ENCODE measurements at regions of chr1 and their contacts with region 1.

Region 1: DNA sequence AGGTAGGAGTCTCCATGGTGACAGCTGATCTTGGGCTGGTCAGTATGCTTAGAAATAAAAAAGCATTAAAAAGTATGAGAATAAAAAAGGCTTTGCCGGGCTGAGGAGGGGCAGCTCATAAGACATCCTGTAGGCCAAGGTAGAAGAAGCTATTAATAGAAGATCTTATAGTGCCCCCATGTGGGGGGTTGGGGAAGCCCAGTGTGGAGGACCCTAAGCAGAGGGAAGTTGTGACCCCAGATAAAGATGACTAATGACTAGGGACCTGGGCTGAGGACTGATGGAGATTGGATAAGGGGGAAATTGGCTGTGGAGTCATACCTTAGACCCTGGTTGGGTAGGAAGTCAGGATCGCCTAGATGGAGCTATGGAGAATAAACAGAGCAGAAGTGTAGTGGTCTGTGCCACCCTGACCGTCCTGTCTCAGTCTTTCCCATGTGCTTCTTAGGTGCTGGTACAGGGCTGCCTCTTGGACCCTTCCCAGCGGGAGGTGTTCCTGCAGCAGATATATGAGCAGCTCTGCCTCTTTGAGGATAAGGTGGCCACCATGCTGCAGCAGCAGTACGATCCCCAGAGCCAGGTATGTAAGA is 25.0 kb downstream of the SZT2 start:
- DNase-seq: peak; percentile 62
- ATAC-seq: peak; percentile 95
- H3K4me3 ChIP-seq: no peak overlapping the region
- H3K27ac ChIP-seq: no peak overlapping the region
- H3K4me1 ChIP-seq: peaks cover 16% of the 10 kb centered on the region
- H3K27me3 ChIP-seq: no peaks in the 10 kb centered on the region
- CTCF ChIP-seq: peak; percentile 75
- EP300 ChIP-seq: no peak
- POLR2A ChIP-seq: no peak
- RAD21 ChIP-seq: peak; percentile 86

Region 2: DNA sequence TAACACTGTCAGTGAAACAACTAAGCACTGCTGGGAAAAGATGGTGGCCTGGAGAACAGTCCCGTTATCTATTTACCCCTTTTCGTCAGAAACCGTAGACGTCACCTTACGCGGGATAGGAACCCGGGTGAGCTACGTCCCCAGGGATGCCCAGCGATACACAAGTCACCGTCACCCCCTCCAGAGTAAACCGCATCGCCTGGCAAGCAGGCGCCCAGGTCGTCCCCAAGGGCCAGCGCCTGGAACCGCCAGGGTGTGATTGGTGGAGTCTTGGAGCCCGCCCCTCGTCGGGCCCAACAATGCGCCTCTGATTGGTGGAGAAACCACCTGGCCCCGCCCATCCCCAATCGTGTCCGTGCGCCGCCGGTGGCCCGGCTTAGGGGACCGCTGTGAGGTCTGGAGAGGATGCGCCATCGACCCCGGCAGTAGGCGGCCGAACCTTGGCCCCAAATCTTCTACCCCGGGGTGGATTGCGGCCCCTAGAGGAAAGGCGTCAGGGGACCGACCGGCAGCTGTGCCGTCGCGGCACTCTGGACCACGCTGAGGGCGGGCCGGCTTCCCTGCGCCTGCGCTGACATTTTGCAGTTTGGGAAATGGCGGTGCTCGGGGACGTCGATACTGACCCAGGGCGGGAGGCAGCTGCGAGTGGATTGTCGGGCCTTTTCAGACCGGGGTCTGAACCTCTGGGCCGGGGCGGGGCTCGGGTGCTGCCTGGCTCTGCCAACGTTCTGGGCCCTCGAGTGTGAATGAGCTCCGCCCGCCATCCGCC is 490.5 kb before region 1 on chr1:
- CTCF ChIA-PET with region 1: no interaction called
- POLR2A ChIA-PET with region 1: no interaction called
- in situ Hi-C with region 1: loop called (anchors 25 kb)
- intact Hi-C with region 1: no loop called
- DNase-seq: peak; percentile 86
- ATAC-seq: peak; percentile 93
- H3K4me3 ChIP-seq: peak overlapping the region; percentile 46 to 74 (median 55)
- H3K27ac ChIP-seq: no peak overlapping the region
- H3K4me1 ChIP-seq: peaks cover 53% of the 10 kb centered on the region
- H3K27me3 ChIP-seq: no peaks in the 10 kb centered on the region
- CTCF ChIP-seq: peak; percentile 58
- EP300 ChIP-seq: no peak
- POLR2A ChIP-seq: peak; percentile 21 to 81; a peak in 2 of 4 replicates
- RAD21 ChIP-seq: peak; percentile 42; the same call in 1 of the 2 replicates

Region 3: GRCh38 chr1:43227143-43227764 is 187.5 kb before region 1 on chr1:
- CTCF ChIA-PET with region 1: interaction called, 35 read pairs
- POLR2A ChIA-PET with region 1: interaction called, 6 read pairs
- in situ Hi-C with region 1: loop called (anchors 5 kb)
- intact Hi-C with region 1: loop called (anchors 1 kb)
- DNase-seq: peak; percentile 64
- ATAC-seq: peak; percentile 94
- H3K4me3 ChIP-seq: no peak overlapping the region
- H3K27ac ChIP-seq: no peak overlapping the region
- H3K4me1 ChIP-seq: no peaks in the 10 kb centered on the region
- H3K27me3 ChIP-seq: peaks cover 4 to 70% of the 10 kb centered on the region in 2 experiments; a peak in 4 of 5 replicates
- CTCF ChIP-seq: peak; percentile 96
- EP300 ChIP-seq: no peak
- POLR2A ChIP-seq: no peak
- RAD21 ChIP-seq: peak; percentile 85

Region 4: DNA sequence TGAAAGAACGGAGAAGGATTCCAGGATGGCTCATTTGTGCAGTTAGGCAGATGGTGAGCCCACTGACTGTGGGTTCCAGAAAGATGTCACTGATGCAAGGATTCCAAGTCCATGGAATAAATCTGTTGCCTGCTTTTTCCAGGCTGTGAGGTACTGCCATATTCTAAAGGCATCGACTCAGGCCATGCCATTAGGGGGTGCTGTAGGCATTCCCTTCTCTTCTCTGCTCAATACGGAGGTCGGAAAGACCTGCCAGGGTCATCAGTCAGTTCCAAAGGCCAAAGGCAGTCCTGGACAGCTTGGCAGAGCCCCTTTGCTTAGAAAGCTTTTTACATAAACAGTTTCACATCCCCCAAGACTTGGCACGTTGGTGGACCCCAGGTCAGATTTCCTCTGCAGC is 176.6 kb before region 1 on chr1:
- CTCF ChIA-PET with region 1: interaction called, 36 read pairs
- POLR2A ChIA-PET with region 1: no interaction called
- in situ Hi-C with region 1: no loop called
- intact Hi-C with region 1: loop called (anchors 1 kb)
- DNase-seq: peak; percentile 81
- ATAC-seq: peak; percentile 95
- H3K4me3 ChIP-seq: no peak overlapping the region
- H3K27ac ChIP-seq: no peak overlapping the region
- H3K4me1 ChIP-seq: peaks cover 6% of the 10 kb centered on the region; the same call in 1 of the 2 replicates
- H3K27me3 ChIP-seq: peaks cover 1 to 27% of the 10 kb centered on the region in 2 experiments; a peak in 4 of 5 replicates
- CTCF ChIP-seq: peak; percentile 97
- EP300 ChIP-seq: no peak
- POLR2A ChIP-seq: no peak
- RAD21 ChIP-seq: peak; percentile 96

Region 5: DNA sequence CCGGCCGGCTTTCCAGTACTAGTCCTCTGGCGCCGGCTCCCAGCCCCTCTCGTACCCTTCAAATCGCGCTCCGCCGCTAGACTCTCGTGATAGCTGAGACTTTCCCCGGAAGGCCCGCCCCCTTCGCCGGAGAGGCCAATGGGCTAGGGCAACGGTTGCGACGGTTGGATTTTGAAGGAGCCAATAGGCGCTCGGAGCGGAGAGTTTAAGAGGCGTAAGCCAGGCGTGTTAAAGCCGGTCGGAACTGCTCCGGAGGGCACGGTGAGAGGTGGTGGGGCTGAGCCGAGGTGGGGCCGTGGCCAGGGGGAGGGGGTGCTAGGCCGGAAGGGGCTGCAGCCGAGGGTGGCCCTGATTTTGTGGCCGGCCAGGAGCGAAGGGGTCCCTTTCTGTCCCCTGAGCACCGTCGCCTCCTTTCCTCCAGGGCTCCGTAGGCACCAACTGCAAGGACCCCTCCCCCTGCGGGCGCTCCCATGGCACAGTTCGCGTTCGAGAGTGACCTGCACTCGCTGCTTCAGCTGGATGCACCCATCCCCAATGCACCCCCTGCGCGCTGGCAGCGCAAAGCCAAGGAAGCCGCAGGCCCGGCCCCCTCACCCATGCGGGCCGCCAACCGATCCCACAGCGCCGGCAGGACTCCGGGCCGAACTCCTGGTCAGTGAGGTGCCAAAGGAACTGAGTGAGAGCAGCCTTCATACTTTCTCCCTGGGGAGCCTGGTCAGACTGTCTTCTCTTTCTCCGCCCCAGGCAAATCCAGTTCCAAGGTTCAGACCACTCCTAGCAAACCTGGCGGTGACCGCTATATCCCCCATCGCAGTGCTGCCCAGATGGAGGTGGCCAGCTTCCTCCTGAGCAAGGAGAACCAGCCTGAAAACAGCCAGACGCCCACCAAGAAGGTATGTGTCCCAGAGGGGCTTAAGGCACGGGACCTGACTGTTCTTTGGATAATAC is 55.7 kb before region 1 on chr1 and contains the start of gene CDC20:
- CTCF ChIA-PET with region 1: no interaction called
- POLR2A ChIA-PET with region 1: no interaction called
- in situ Hi-C with region 1: no loop called
- intact Hi-C with region 1: loop called (anchors 1 kb)
- DNase-seq: peak; percentile 97
- ATAC-seq: peak; percentile 96
- H3K4me3 ChIP-seq: peak within 1 kb of the TSS; percentile 92 to 97 (median 97)
- H3K27ac ChIP-seq: peak within 1 kb of the TSS; percentile 76
- H3K4me1 ChIP-seq: peaks cover 63% of the 10 kb centered on the region
- H3K27me3 ChIP-seq: no peaks in the 10 kb centered on the region; a peak in 1 of 5 replicates
- CTCF ChIP-seq: no peak
- EP300 ChIP-seq: no peak
- POLR2A ChIP-seq: peak; percentile 82 to 87
- RAD21 ChIP-seq: no peak
- total RNA-seq, gene CDC20: 90.0 and 97.8 TPM in 2 replicates

Region 6: DNA sequence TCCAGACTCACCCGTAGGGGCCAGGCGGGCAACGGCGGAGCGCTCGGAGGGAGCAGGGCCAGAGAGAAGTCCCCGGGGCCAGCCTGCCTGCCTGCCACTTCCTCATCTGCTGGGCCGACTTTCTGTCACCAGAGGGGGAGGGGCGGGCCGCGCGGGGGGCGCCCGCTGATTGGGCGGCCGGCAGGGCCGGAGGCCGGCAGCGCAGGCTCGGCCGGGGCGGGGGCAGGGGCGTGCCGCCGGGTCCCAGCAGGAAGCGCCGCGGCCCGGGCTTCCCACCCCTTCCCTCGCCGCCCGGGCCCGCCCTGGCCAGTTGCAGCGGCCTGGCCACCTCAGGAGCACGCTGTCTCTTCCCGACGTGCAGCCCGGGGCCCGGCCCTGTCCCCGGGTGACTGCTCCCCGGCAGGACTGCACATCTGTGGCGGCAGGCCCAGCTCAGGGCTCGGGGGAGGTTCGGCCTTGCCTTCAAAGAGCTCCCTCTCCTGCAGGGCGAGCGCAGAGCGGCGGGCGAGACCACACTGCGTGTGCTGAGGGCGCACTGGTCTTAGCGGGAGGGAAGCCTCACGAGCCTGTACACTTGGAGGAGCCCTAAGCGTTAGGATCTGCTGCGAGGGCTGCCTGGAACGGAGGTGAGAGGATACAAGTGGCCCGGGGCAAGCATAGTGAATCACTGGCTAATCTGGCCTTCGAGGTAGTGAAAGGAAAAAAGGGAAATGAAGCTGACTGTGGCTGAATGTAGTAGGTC is 46.7 kb before region 1 on chr1 and contains the start of gene ELOVL1:
- CTCF ChIA-PET with region 1: no interaction called
- POLR2A ChIA-PET with region 1: no interaction called
- in situ Hi-C with region 1: no loop called
- intact Hi-C with region 1: loop called (anchors 1 kb)
- DNase-seq: peak; percentile 75
- ATAC-seq: peak; percentile 89
- H3K4me3 ChIP-seq: peak within 1 kb of the TSS; percentile 76 to 88 (median 79)
- H3K27ac ChIP-seq: peak within 1 kb of the TSS; percentile 91
- H3K4me1 ChIP-seq: peaks cover 52% of the 10 kb centered on the region
- H3K27me3 ChIP-seq: no peaks in the 10 kb centered on the region
- CTCF ChIP-seq: peak; percentile 71
- EP300 ChIP-seq: no peak
- POLR2A ChIP-seq: peak; percentile 75 to 96
- RAD21 ChIP-seq: peak; percentile 60
- total RNA-seq, gene ELOVL1: 29.7 and 55.2 TPM in 2 replicates